ENCODE measurements at regions of chr7 and their contacts with region 1.

Region 1: DNA sequence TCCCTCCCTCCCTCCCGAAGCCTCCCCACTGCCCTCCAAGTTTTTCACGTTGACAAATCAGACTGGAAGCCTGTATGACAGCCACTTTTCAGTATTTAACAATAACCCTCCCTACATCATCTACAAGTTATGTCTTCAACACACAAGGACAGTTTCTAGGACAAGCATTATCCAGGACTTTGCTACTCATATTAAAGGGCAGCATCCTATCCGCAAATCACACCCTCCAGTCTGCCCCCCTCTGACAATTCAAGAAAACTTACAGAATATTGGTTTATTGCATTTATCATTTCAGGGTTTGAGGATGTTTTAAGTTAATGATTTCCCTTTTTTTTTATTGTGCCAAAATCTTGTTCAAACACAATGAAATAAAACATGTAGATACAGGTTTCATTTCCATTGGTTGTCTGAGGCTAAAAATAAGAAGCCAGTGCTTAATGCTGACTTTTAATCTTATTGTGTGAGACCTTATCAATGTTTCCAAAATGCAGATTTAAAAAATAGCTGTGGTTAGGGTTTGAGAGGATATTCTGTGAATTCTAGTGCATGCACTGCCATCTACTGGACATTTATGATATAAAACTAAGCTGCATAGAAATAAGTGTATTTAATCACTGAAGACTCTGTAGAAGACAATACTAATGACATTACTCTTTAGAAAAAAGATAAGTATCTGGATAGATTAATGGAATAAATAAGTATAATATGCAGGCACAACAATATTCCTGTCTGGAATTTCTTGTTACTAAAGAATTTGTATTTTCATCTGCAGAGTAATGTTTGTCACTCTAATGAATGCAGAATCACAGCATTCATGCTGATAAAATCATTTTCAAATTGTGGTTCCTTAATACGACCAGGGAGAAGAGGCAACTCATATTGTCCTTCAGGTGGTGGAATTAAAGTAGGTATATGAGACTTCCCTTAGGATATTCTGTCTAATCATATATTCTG is 64.1 kb downstream of the CAV1 start:
- DNase-seq: no peak
- ATAC-seq: no peak

Region 2: DNA sequence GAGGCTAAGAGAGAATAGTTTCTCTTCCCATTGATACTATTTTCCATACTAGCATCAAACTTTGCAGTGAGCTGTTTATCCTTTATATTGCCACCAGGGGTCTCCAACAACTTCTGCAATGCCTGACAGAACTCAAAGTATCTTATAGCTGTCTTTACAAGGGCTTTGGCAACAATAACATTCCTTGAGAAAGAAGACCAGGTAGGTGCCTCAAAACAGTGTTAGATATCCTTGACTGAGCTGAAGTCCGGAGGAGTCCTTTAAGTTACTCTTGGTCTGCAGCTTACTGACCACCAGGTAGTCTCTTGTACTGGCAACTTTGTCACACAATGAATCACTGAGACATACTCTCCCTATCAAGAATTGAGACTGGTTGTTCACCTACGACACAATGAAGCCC is 408.6 kb before region 1 on chr7:
- intact Hi-C with region 1: loop called (anchors 2 kb)
- DNase-seq: no peak
- ATAC-seq: peak; percentile 34

Region 3: DNA sequence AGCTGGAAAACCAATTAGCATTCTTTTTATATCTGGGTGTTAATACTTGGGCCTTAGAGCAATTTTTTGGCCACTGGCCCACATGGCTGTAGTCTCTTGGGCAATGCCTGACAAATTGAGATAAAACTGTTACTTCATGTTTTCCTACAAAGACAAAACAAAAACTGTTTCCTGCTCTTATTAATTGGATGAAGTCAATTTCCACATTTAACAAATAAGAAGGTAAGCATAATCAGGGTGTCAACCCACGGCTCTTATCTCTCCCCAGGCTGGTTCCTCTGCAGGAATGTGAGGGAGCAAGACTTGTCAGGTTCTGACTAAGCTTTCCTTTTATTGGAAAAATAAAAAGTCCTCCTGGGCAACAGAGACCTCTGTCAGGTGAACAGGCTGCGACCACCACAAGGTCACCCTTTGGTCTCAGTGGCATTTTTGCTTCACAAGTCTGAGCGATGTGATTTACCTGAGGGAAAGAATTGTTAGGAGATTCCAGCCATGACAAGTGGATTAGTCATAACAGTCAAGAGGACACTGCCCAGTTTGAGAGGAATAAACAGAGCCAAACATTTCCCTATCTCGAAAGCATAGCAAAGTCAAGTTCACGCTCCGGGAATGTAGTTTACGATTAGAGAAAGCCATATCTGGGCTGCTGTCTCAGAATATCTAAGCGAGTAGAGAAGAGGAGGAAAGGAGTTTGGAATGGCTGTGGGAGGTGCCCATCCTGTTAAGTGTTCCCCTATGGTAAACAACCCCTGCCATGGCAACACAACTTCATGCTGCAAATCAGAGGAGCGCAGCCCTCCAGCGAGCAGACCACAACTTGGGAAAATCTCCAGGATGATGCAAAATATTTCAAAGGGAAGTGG is 234.1 kb before region 1 on chr7:
- intact Hi-C with region 1: loop called (anchors 5 kb)
- DNase-seq: peak; percentile 69
- ATAC-seq: peak; percentile 89

Region 4: GRCh38 chr7:116525913-116526861 is 62.7 kb before region 1 on chr7:
- intact Hi-C with region 1: loop called (anchors 2 kb)
- DNase-seq: peak; percentile 89
- ATAC-seq: peak; percentile 90

Region 5: DNA sequence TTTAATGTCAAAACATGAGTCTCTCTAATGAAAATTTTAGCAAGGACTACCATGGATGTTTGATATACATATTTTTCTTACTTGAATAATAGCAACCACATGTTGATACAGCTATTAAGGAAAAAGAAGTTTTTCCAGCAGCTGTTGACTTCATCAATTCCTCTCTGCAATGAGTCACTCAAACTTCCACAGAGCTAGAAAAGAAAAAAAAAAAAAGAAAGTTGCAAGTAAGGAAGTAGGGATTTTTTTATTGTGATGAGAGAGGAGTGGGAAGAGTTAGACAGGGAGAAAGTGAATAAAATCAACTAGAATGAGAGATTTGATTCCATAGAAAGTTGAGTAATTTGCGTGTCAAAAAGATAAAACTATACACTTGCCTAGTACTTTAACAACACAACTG is 17.9 kb before region 1 on chr7:
- intact Hi-C with region 1: no loop called
- DNase-seq: no peak
- ATAC-seq: no peak

Region 6: DNA sequence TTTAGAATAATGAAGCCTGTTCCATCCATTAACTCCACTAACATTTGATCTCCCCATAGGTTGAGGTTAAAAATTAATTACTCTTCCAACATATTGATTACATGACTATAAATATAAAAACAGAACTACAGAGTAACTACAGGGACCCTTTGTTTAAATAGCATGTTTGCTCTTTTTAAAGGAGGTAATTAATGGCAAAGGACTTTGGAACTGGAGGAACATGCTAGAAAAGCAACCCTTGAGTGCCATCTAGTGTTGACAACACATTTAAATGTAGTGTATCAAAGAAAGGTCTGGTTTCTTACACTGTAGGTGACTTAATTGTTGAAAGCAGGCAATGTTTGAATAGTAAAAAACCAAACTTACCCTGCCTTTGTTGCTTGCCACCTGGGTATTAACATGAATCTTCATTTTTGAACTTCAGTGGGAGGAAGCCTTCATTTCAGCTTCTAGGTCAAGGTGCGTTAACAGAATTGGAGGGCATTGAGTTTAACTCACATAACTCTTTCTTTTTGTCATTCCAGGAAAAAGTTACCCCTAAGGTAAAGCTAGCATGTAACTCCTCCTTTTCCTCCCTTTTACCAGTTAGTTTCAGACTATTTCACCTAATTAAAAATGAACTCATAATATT is 220.8 kb after region 1 on chr7:
- intact Hi-C with region 1: loop called (anchors 1 kb)
- DNase-seq: no peak
- ATAC-seq: peak; percentile 52

Region 7: GRCh38 chr7:116999311-116999710 is 410.4 kb after region 1 on chr7:
- intact Hi-C with region 1: no loop called
- DNase-seq: no peak
- ATAC-seq: no peak

Measured in Right ventricle myocardium inferior (tissue), 1 donor.